ENCODE measurements at regions of chr16 and their contacts with region 1.

Region 1: DNA sequence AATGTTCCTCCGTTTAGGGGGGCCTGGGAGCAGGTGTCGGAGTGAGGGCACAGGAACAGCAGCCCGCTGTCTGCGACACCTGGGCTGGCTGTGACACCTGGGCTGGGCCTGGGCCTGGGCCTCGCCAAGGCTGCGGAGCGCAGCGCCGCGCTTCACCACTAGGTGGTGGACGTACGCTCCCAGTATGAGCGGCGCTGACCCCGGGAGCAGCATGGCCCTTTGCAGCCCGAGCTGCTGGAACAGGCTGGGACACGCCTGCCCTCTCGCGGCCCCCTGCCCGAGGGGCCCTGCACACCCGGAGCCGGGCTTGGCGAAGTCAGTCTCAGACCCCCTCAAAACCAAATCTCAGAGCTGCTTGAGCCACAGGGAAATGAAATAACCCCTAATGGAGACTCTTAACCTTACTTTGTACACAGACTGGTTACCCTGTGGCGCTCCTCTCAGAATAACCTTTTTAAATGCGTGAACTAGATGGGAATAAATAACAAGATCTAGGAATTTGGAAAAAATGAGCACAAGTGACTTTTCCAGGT is 38.6 kb upstream of the FA2H start:
- DNase-seq: peak; percentile 52
- H3K4me3 ChIP-seq: no peak overlapping the region
- H3K27ac ChIP-seq: no peak overlapping the region
- H3K4me1 ChIP-seq: peaks cover 5% of the 10 kb centered on the region
- H3K27me3 ChIP-seq: no peaks in the 10 kb centered on the region
- CTCF ChIP-seq: peak; percentile 88 to 97

Region 2: GRCh38 chr16:74709441-74709877 is 103.7 kb before region 1 on chr16:
- CTCF ChIA-PET with region 1: no interaction called
- dilution Hi-C with region 1: loop called (anchors 5 kb)
- in situ Hi-C with region 1: no loop called
- intact Hi-C with region 1: loop called (anchors 1 kb)
- DNase-seq: peak; percentile 73
- H3K4me3 ChIP-seq: no peak overlapping the region
- H3K27ac ChIP-seq: no peak overlapping the region
- H3K4me1 ChIP-seq: no peaks in the 10 kb centered on the region
- H3K27me3 ChIP-seq: no peaks in the 10 kb centered on the region
- CTCF ChIP-seq: peak; percentile 97 to 98

Region 3: DNA sequence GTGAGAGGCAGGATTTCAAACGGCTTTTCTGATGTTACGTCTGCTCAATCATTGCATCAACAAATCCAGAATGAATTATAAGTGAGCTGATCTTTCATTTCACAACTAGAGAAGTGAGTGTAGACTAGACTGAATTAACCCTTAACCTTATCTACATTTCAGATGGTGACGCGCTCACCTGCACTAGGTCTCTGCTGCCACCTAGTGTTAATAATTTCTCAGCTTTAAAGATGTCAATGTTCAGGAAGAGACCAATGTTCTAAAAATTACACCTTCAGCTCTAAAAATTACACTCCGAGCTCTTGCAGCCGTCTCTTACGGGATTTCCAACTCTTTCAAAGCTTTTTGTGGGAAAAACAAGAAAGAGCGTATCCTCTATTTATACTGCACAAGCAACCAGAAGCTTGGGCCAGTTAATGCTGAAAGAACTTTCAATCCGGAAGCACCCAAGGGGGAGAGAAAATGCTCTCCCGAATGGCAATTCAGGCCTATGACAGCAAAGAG is 49.6 kb after region 1 on chr16:
- CTCF ChIA-PET with region 1: interaction called, 9 read pairs
- dilution Hi-C with region 1: no loop called
- in situ Hi-C with region 1: loop called in 1 of 2 experiments (anchors 10 kb)
- intact Hi-C with region 1: loop called (anchors 1 kb)
- DNase-seq: peak; percentile 49
- H3K4me3 ChIP-seq: no peak overlapping the region
- H3K27ac ChIP-seq: no peak overlapping the region
- H3K4me1 ChIP-seq: peaks cover 6% of the 10 kb centered on the region
- H3K27me3 ChIP-seq: no peaks in the 10 kb centered on the region
- CTCF ChIP-seq: peak; percentile 78 to 88

Region 4: GRCh38 chr16:74896389-74897240 is 83.4 kb after region 1 on chr16:
- CTCF ChIA-PET with region 1: no interaction called
- dilution Hi-C with region 1: loop called (anchors 5 kb)
- in situ Hi-C with region 1: no loop called
- intact Hi-C with region 1: no loop called
- DNase-seq: peak; percentile 62
- H3K4me3 ChIP-seq: no peak overlapping the region
- H3K27ac ChIP-seq: no peak overlapping the region
- H3K4me1 ChIP-seq: peaks cover 4% of the 10 kb centered on the region
- H3K27me3 ChIP-seq: no peaks in the 10 kb centered on the region
- CTCF ChIP-seq: no peak

Region 5: GRCh38 chr16:74909366-74910064 is 96.3 kb after region 1 on chr16:
- CTCF ChIA-PET with region 1: no interaction called
- dilution Hi-C with region 1: no loop called
- in situ Hi-C with region 1: no loop called
- intact Hi-C with region 1: no loop called
- DNase-seq: no peak
- H3K4me3 ChIP-seq: no peak overlapping the region
- H3K27ac ChIP-seq: no peak overlapping the region
- H3K4me1 ChIP-seq: no peaks in the 10 kb centered on the region
- H3K27me3 ChIP-seq: no peaks in the 10 kb centered on the region
- CTCF ChIP-seq: no peak

Region 6: GRCh38 chr16:75130150-75130771 is 317.1 kb after region 1 on chr16:
- CTCF ChIA-PET with region 1: no interaction called
- dilution Hi-C with region 1: no loop called
- in situ Hi-C with region 1: no loop called
- intact Hi-C with region 1: loop called (anchors 5 kb)
- DNase-seq: no peak
- H3K4me3 ChIP-seq: no peak overlapping the region
- H3K27ac ChIP-seq: no peak overlapping the region
- H3K4me1 ChIP-seq: no peaks in the 10 kb centered on the region
- H3K27me3 ChIP-seq: no peaks in the 10 kb centered on the region
- CTCF ChIP-seq: peak; percentile 5 to 6

Measured in mammary epithelial cell (primary cell).